Right cardiac atrium (tissue), 5 donors: ENCODE measurements at regions of chr11 and their contacts with region 1.

Region 1: DNA sequence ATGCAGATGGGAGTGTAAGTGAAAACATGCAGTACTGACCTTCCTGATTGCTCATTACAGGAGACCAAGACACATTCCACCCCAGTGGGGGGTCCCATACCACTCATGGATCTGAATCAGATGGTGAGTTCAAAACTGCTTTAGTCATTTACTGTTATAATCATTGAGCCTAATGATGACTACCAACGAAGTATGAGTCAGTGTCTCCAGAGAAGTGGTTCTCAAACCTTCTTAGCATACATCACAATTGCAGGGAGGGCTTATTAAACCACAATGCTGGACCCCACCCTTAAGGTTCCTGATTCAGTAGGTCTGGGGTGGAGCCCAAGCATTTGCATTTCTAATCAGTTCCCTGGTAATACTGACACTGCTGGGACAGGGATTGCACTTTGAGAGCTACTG is 75.8 kb downstream of the CD44 start:
- DNase-seq: no peak
- ATAC-seq: peak in 1 of 2 donors; percentile 62
- H3K4me3 ChIP-seq: no peak overlapping the region
- H3K27ac ChIP-seq: no peak overlapping the region
- H3K4me1 ChIP-seq: no peaks in the 10 kb centered on the region
- H3K27me3 ChIP-seq: no peaks in the 10 kb centered on the region

Region 2: GRCh38 chr11:34988294-34989255 is 226.2 kb before region 1 on chr11:
- intact Hi-C with region 1: no loop called
- DNase-seq: no peak
- ATAC-seq: no peak
- H3K4me3 ChIP-seq: no peak overlapping the region
- H3K27ac ChIP-seq: no peak overlapping the region
- H3K4me1 ChIP-seq: no peaks in the 10 kb centered on the region
- H3K27me3 ChIP-seq: no peaks in the 10 kb centered on the region

Region 3: DNA sequence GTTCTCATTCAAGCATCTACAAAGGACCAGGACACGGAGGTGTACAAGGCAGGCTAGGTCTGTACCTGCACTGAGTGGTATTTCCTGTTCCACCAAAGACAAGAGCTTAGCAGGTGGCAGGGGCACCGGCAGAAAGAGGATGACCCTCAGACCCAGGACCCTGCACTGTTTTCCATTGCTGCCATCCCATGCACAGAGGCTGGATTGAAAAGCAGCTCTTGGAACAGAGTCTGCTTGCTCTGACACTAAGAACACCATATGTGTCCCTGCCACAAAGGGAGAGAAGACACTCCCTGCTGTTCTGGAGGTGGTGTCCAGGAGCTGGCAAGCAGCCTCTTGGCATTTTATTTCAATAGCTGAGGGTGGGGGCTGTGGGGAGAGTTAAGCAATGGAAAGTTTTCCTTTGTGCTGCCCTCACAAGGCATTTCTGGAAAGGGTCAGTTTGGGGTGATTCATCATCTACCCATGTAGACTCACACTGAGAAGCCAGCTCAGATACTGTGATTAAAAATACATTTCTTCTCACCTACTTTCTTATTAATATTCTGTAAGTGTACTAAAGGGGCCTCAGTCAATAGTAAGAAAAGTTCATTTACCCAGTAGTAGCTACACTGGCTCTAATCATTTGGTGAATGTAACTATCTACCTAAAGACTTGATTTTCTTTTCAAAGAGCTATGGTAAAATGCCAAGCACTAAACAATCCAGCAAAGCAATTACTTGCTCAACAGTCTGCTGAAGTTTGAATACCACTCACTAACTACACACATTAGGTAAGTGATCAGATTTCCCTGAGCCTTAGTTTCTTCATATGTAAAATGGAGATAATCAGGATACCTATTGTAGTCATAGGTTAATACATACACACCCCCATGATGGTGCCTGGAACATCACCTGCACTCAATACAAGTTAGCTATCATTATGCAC is 149.3 kb after region 1 on chr11:
- intact Hi-C with region 1: loop called in 1 of 4 experiments (anchors 10 kb)
- DNase-seq: peak; percentile 73 to 75 (median 75)
- ATAC-seq: peak; percentile 79 to 91
- H3K4me3 ChIP-seq: no peak overlapping the region
- H3K27ac ChIP-seq: peak overlapping the region; percentile 70
- H3K4me1 ChIP-seq: peaks cover 12% of the 10 kb centered on the region
- H3K27me3 ChIP-seq: no peaks in the 10 kb centered on the region

Region 4: DNA sequence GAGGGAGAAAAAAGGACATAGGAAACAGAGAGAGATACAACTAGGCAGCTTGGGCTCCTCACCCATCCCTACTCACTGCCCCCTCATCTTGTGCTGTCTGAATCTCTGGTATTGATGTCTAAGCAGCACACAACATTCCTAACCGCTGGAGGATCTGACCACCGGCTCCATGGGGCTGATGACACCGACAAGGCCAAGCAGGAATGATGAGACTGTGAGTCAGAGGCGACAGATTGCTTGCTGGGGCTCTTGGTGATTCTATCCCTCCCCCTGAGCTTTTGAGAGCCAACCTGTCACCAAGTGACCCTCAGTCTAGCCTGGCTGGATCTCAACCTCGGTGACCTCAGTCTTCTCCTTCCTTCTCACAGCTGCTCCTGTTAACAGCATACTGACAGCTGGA is 296.9 kb after region 1 on chr11:
- intact Hi-C with region 1: no loop called
- DNase-seq: no peak
- ATAC-seq: no peak
- H3K4me3 ChIP-seq: no peak overlapping the region
- H3K27ac ChIP-seq: no peak overlapping the region
- H3K4me1 ChIP-seq: no peaks in the 10 kb centered on the region
- H3K27me3 ChIP-seq: no peaks in the 10 kb centered on the region